Activated T-helper 1 cell treated with anti-CD3 and anti-CD28 coated beads, Interleukin-12 subunit alpha, Interleukin-12 subunit beta, Interleukin-2, Interleukin-4 antibody, amounts not matched to agents 30 ng/mL and 10 ng/mL and 1 ng/mL, durations not matched to agents 14 hours and 24 hours and 36 hours (primary cell): ENCODE measurements at regions of chr5 and their contacts with region 1.

Region 1: DNA sequence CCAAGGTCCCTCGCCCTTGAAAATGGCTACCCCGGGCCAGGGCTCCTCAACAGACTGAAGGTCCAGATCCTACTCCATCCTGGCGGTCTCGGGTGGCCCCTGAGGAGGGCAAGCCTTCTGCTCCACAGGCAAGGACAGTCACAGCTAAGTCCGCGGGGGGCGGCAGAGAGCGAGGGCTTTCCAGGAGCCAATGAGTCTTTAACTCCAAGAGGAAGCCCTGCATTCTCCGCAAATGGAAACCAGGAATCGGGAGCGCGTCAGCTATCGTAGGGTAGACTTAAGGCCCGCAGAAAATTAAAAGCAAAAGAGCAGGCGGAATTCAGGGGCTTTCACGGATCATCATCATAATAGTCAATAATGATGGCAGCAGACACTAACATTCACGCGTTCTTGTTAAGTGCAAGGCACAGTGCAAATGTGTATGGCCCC is 87.8 kb upstream of the TNFAIP8 start:
- DNase-seq: peak; percentile 72
- H3K4me3 Mint-ChIP-seq: peak overlapping the region; percentile 99
- H3K27ac Mint-ChIP-seq: peak overlapping the region; percentile 97
- H3K4me1 Mint-ChIP-seq: peaks cover 55% of the 10 kb centered on the region
- H3K27me3 Mint-ChIP-seq: no peaks in the 10 kb centered on the region

Region 2: DNA sequence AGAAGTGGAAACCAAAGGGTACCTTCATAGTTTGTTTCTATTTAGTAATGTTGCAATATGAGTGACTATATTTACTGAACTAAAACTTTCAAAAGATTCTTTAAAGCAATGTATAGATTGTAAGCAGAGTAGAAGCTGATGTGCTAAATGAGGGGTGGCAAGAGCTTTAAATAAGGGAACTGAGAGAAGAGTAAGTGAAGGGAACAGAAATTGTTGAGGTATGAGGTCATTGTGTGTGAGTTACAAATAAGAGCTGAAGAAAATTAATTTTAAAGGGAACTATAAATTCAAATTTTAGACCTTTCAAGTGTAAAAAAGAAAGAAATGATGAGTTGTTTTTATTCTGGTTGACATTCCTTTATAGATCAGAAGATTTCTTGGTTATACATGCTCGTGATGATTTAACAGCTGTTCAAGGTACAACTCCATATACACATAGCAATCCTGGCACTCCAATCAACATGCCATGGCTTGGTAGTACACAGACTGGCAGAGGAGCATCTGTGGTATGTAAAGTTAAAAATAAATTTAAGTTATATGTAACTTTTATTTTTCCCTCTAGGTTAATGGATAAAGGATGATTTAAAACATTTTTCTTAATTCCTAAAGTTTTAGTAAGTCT is 47.3 kb before region 1 on chr5:
- intact Hi-C with region 1: no loop called
- DNase-seq: no peak
- H3K4me3 Mint-ChIP-seq: no peak overlapping the region
- H3K27ac Mint-ChIP-seq: no peak overlapping the region
- H3K4me1 Mint-ChIP-seq: no peaks in the 10 kb centered on the region
- H3K27me3 Mint-ChIP-seq: no peaks in the 10 kb centered on the region

Region 3: DNA sequence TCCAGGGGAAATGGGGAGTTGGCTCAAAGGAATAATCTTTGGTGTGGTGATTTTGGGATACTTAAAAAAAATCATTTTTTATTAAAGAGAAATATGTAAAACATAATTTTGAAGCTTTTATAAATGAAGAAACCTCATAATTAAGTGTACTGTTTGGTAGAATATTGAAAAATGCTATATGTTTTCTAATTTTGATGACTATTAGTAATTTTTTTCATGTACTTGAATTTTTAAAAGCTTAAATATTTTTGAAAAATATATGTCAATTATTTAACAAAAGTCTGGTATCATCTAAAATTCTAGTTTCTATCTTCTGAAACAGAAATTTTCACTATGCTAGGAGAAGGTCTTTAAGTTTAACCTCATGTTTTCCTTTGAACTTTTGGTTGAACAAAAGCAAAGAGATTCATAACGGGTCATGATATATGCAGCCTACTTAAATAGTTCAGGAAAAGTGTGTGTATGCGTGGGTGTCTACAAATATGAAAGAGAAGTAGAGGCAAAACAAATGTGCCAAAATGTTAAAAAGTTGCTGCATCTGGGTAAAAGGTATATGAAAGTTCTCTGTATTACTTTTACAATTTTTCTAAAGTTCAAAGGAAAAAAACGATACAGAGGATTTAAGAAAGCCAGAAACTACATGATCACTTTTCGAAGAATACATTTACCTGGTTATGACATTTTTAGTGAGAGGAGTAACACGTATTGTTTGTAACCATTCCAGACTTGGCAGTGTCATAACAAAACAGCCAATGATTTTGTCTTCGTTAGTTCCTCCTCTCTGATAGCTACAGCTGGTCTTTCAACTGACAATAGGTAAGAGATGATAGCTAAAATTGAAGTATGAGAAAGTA is 29.5 kb before region 1 on chr5:
- intact Hi-C with region 1: loop called (anchors 2 kb)
- DNase-seq: no peak
- H3K4me3 Mint-ChIP-seq: peak overlapping the region; percentile 15
- H3K27ac Mint-ChIP-seq: peak overlapping the region; percentile 19
- H3K4me1 Mint-ChIP-seq: peaks cover 20% of the 10 kb centered on the region
- H3K27me3 Mint-ChIP-seq: no peaks in the 10 kb centered on the region

Region 4: GRCh38 chr5:119309326-119309725 is 41.4 kb after region 1 on chr5:
- intact Hi-C with region 1: loop called (anchors 1 kb)
- DNase-seq: no peak
- H3K4me3 Mint-ChIP-seq: peak overlapping the region; percentile 82
- H3K27ac Mint-ChIP-seq: peak overlapping the region; percentile 96
- H3K4me1 Mint-ChIP-seq: peaks cover 92% of the 10 kb centered on the region
- H3K27me3 Mint-ChIP-seq: no peaks in the 10 kb centered on the region

Region 5: DNA sequence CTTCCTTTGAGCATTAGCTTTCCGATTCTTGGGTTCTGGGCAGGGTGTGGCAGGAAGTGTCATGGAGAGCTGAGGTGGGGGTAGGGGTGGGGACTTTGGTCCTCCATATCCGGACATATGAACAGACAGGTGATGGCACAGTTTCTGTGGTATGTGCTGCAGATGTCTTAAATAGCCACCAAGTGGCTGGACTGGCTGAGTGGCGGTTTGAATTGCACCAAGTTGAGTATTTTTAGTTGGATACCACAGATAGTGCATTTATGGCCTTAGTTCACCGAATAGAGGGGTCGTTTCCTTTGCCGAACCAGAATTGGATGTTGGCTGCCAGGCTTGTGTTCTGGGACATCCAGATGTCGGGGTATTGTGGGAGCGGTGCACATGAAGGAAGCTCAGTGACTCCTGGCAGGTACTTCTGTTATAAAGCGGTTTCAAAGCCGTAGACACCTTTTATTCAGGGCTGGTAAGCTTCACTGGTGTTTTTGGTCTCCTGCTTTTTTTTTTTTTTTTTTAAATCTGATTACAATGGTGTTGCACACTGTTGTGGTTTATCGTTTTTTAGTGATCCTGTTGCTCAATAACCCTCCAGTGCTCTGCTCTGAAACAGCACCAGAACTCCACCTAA is 72.7 kb after region 1 on chr5:
- intact Hi-C with region 1: loop called (anchors 1 kb)
- DNase-seq: peak; percentile 63
- H3K4me3 Mint-ChIP-seq: peak overlapping the region; percentile 83
- H3K27ac Mint-ChIP-seq: peak overlapping the region; percentile 100
- H3K4me1 Mint-ChIP-seq: peaks cover 95% of the 10 kb centered on the region
- H3K27me3 Mint-ChIP-seq: no peaks in the 10 kb centered on the region

Region 6: DNA sequence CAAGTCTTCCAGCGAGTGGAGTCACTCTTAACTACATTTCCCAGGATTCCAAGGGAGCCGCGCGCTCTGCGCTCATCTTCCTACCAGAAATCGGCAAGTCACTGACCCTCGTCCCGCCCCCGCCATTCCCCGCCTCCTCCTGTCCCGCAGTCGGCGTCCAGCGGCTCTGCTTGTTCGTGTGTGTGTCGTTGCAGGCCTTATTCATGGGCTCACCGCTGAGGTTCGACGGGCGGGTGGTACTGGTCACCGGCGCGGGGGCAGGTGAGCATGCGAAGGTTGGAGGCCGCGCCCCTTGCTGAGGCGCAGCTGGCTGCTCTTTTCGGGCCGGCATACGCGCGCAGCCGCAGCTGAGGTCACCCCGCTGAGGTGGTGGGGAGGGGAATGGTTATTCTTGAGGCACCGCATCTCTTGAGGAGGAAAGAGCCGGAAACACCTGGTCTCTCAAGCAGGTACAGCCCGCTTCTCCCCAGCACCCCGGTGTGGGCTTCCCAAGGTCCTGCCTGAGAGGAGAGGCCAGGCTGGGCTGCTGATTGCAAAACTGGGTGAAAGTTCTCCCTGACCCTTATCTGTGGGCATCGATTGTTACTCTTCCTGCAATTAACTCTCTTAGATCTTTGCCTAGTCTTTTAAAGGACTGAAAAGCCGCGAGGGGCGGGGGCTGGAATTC is 184.5 kb after region 1 on chr5 and contains the start of gene HSD17B4:
- intact Hi-C with region 1: loop called (anchors 5 kb)
- DNase-seq: peak; percentile 72
- H3K4me3 Mint-ChIP-seq: peak within 1 kb of the TSS; percentile 93
- H3K27ac Mint-ChIP-seq: peak within 1 kb of the TSS; percentile 88
- H3K4me1 Mint-ChIP-seq: peaks cover 20% of the 10 kb centered on the region
- H3K27me3 Mint-ChIP-seq: peaks cover 8% of the 10 kb centered on the region
- total RNA-seq, gene HSD17B4: 65.6 and 78.2 TPM in 2 replicates